Common myeloid progenitor, CD34-positive (primary cell): ENCODE measurements at regions of chr17 and their contacts with region 1.

Region 1: DNA sequence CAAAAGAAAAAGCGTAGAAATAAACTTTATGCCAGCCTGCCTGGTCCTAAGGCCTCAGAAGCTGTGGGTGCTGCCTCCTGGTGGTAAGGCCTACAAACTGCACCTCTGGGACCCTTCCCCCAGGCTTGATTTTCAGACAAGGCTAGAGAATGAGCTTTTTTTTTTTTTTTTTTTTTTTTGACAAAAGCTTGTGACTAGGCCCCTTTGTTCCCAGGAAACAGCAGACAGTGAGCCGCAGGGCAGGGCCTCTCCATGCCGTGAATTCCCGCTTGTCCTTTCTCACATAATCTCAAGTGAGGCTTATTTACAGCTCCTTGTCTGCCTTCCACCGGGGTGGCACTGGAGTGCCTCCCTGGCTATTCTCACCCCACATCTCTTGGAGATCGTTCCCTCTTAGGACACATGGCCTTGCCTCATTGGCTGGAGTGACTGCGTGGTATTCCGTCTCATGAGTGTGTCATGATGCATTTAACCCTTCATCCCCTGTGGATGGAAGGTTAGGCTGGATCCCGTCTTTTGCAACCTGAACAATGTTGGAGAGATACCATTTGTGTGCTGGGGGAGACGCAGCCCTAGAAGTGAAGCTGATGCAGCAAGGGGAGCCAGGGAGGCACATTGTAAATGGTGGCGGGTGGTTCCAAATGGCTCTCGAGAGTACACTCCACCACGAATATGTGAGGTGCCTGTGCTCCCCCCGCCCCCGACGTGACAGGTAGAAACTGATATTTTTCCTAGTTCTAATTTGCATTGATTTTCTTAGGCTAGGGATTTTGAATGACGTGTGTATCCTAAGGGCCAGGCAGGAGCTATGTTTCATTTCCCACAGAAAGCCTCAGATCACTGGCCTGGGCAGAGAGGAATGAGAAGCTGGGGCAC is 49.6 kb downstream of the USP22 start:
- DNase-seq: peak; percentile 84 to 91 (median 87)
- H3K4me3 ChIP-seq: peak overlapping the region in 1 of 7 experiments; percentile 7
- H3K27ac ChIP-seq: no peak overlapping the region
- H3K4me1 ChIP-seq: no peaks in the 10 kb centered on the region
- H3K27me3 ChIP-seq: no peaks in the 10 kb centered on the region

Region 2: DNA sequence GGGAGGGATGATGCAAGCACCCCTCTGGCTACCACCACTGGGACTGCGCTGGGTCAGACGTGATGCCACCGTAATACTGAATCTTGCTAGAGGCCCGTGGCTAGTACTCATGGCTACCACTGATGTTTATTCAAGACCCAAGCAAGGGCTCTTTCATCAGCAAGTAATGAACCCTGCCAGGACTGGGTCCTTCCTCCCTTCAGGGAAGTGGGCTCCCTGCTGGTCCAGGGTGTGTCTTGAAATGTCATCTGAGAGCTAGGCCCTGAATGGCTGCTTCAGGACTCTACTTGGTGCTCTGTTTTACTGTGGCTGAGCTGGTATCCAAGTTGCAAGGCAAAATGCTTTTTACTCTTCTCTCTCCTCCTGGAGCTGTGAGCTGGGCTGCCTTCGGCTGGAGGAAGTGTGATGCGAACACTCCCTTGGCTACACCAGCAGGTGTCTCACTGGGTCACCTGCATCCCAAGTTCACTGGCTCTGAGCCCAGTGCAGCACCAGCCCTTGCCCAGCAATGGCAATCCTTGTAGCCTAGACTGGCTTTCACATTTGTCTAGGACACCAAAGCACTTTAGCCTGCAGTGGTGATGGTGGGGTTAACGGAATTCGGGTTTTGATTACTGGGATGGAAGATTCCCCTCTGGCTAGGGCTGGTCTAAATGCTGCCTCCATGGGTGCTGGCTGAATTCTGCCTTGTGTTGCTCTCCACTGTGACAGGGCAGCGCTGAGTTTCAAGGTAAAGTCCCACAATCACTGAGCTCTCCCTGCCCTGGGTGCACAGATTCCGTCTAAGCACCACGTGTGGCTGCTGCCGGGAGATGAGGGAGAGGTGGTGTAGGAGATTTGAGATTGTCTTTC is 49.0 kb before region 1 on chr17:
- CTCF ChIA-PET with region 1: interaction called, 13 read pairs
- POLR2A ChIA-PET with region 1: no interaction called
- DNase-seq: peak; percentile 31 to 52 (median 46)
- H3K4me3 ChIP-seq: no peak overlapping the region
- H3K27ac ChIP-seq: no peak overlapping the region
- H3K4me1 ChIP-seq: peaks cover 0 to 3% (median 0%) of the 10 kb centered on the region in 4 experiments
- H3K27me3 ChIP-seq: no peaks in the 10 kb centered on the region